ENCODE measurements at regions of chr2 and their contacts with region 1.

Region 1: GRCh38 chr2:37394796-37395555 is 50.5 kb downstream of the QPCT start:
- DNase-seq: no peak

Region 2: DNA sequence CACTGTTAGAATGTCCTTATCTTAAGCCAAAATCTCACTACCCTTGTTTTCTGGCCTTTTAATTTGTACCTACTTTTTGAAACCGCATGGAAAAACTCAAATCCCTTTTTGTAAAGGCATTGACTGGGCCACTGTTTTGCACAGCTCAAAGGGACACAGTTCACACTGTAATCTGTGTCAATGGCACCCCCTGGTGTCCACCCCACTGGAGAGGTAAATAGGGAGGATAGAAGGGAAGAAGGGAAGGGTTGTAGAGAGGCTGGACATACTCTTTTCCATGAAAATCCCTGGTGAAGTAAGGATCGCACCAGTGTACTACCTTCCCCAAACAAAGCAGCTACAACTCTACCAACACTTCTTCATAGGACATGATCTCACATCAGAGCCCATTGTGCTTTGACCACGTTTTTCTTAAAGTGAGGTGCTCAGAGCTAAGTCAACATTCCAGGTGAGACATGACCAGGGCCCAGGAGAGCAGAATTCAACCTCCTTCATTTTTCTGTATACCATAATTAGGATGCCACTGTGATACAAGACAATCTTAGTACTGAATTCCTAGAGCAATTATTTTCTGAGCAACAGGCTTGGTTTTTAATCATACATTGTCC is 437.7 kb after region 1 on chr2:
- intact Hi-C with region 1: loop called (anchors 5 kb)
- DNase-seq: peak; percentile 59 to 93 (median 86)

Measured in head of caudate nucleus (tissue), 42 donors.